ENCODE measurements at regions of chr10 and their contacts with region 1.

Region 1: GRCh38 chr10:11335167-11335652 is 276.2 kb downstream of the USP6NL start:
- DNase-seq: no peak
- H3K4me3 ChIP-seq: no peak overlapping the region
- CTCF ChIP-seq: no peak

Region 2: GRCh38 chr10:11301571-11302111 is 33.6 kb before region 1 on chr10:
- in situ Hi-C with region 1: loop called (anchors 5 kb)
- DNase-seq: no peak
- H3K4me3 ChIP-seq: no peak overlapping the region
- CTCF ChIP-seq: no peak

Region 3: DNA sequence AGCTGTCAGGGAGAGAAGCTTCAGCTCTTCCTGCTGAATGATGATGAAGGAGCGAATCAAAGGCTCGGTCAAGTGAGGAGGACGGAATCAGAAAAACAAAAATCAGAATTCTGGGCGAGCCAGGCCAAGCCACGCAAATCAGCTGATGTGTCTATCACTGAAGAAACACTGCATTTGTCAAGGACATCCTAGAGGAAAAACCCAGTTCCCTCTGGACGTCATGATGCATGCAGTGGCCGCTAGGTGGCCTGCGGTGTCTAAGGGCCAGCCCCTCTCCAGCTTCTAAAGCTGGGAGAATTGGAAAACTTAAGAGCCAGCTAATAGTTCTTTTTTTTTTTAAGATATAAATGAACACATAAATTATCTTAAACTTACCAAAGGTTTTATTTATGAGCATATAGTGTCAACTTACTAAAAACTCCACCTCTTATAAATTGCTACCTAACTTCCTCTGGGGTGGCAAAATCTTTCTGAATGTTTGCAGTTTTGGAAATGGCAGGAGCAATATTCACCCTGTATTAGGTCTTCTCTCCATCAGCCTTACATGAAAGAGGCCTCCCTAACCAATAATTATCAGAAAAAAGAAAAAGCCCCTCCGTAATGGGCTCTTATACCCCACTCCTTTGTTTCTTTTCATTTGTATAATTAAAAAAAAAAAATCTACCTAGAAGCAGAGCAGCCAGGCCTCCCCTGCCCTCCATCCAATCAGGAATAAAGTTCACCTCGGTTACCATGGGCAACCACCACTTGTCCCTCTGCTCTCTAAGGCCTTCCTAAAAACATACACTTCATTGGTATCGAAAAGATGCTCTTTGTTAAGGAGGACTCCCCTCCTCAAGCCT is 89.5 kb after region 1 on chr10:
- in situ Hi-C with region 1: loop called (anchors 5 kb)
- DNase-seq: peak; percentile 3
- H3K4me3 ChIP-seq: no peak overlapping the region
- CTCF ChIP-seq: peak; percentile 95

Measured in astrocyte of the cerebellum (primary cell).